ENCODE measurements at regions of chr12 and their contacts with region 1.

Region 1: DNA sequence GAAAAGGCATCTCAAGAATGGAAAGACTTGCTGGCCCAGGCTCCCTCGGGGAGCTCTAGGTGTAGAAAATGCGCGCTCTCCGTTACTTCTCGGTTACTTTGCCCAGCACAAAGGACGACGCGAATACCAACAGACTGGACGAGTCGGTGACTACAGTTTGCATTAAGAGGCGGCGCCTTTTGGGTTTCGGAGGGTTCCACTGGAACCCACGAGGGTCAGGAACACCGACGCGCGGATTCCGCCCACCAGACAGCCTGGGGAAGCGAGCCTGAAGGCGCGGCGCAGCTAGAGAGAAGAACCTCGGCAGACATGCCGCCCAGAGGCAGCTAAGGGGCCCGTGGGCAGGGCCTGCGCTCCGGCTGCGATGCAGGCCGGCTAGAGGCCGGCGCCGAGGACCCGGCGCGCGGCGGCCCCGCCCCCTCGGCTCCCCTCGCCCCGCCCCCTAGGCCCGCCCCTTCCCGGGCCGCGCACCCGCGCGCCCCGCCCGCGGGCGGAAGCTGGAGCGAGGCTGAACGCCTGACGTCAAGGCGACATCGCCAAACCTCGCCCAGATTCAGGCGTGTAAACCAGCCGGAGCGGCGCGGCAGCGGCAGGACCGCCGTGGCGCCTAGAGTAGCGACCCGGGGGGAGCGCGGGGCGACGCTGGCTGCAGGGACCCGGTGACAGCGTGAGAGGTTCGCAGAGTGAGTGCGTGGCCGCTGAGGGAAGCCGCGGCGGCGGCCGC is at the start of gene RAP1B:
- DNase-seq: peak; percentile 88
- H3K4me3 Mint-ChIP-seq: peak within 1 kb of the TSS; percentile 94
- H3K27ac Mint-ChIP-seq: peak within 1 kb of the TSS; percentile 97
- H3K4me1 Mint-ChIP-seq: peaks cover 43% of the 10 kb centered on the region
- H3K27me3 Mint-ChIP-seq: no peaks in the 10 kb centered on the region
- total RNA-seq, gene RAP1B: 174 and 182 TPM in 2 replicates

Region 2: GRCh38 chr12:68189821-68190242 is 420.7 kb before region 1 on chr12:
- intact Hi-C with region 1: no loop called
- DNase-seq: no peak
- H3K4me3 Mint-ChIP-seq: no peak overlapping the region
- H3K27ac Mint-ChIP-seq: peak overlapping the region; percentile 56
- H3K4me1 Mint-ChIP-seq: peaks cover 16% of the 10 kb centered on the region
- H3K27me3 Mint-ChIP-seq: peaks cover 52% of the 10 kb centered on the region

Region 3: DNA sequence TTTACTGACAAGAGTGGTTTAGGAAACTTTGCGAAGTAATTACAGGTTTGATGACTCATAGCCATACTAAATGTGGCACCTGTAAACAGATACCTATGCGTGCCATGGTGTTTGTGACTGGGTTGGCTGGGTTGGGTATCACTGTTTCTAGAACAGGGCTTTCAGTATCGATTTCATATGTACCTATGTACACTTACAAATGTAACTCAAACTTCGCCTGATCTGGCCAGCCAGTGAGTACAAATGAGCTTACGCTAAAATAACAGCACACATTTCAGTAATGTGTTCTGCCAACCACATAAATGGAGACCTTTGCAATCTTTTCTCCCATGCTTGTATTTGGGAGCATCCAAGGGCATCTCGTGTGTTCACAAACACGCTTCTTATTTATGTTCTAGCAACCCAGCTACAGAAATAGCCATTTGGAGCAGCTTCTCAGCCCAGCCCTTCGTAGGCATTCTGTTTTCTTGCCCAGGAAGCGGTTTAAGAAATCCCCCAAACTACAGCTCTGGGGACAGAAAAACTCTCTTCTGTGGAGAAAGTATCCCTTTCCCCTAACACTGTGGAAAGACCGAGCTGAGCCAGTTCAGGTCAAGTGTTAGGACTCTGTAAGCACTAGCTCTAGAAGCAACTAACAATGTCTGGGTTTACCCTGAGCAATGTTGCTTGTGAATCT is 236.1 kb before region 1 on chr12:
- intact Hi-C with region 1: loop called (anchors 1 kb)
- DNase-seq: peak; percentile 57
- H3K4me3 Mint-ChIP-seq: no peak overlapping the region
- H3K27ac Mint-ChIP-seq: peak overlapping the region; percentile 91
- H3K4me1 Mint-ChIP-seq: peaks cover 30% of the 10 kb centered on the region
- H3K27me3 Mint-ChIP-seq: no peaks in the 10 kb centered on the region

Region 4: GRCh38 chr12:68497702-68498101 is 112.8 kb before region 1 on chr12:
- intact Hi-C with region 1: loop called (anchors 1 kb)
- DNase-seq: no peak
- H3K4me3 Mint-ChIP-seq: peak overlapping the region; percentile 51
- H3K27ac Mint-ChIP-seq: peak overlapping the region; percentile 86
- H3K4me1 Mint-ChIP-seq: peaks cover 33% of the 10 kb centered on the region
- H3K27me3 Mint-ChIP-seq: peaks cover 3% of the 10 kb centered on the region

Region 5: DNA sequence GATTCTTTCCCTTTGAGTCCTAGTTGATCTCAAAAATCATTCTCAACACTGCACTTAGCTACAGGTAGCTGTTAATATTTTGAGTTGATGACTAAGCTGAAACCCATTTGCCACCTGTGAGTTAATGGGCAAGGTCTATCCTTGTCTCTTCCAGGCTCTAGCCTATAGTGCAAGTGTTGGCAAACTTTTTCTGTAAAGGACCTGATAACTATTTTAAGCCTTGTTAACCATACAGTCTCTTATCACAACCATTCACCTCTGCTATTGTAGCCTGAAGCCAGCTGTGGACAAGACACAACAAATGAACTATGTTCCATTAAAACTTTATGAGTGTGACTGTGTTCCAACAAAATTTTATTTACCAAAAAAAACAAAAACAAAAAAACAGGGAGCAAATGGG is 19.5 kb after region 1 on chr12:
- intact Hi-C with region 1: loop called (anchors 2 kb)
- DNase-seq: no peak
- H3K4me3 Mint-ChIP-seq: no peak overlapping the region
- H3K27ac Mint-ChIP-seq: no peak overlapping the region
- H3K4me1 Mint-ChIP-seq: peaks cover 49% of the 10 kb centered on the region
- H3K27me3 Mint-ChIP-seq: no peaks in the 10 kb centered on the region

Region 6: DNA sequence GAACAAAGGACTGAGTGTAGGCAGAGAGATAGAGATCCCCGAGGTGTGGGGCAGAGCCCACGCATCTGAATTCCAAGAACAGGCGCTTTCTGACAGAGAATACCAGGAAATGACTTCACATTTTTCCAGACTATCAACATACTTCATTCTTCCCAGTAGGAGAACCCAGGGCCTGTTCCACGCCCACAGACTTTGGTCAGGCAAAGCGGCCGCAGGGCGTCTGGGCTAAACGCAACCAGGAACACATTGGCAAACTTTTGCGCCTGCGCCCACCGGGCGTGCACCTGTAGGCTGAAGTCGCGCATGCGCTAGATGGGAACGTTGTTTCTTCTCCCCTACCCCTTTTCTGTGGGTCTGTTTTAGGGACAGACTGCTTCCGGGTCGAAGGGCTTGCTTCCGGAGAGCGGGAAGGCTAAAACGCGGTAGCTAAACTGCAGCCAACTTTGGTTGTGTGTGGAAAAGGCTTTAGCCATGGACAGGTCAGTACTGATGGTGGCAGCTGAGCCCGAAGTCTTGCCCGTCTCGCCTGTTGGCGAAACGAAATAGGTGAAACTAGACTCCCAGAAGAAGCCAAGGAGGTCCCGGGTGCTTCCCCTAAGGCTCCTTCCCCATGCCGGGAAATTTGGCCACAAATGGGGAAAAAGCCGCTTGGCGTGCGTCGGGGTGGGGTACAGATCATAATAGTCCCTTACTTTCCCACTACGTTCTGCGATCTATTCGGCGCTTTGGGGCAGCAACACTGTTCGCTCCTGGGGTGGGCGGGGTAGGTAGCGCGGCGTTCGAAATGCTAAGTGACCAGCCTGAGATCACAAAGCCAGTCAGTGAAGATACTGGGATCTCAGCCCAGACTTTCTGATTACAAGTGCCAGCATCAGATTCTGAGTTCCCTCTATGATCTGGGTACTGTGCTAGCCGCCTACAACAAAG is 76.3 kb after region 1 on chr12 and contains the start of gene NUP107:
- intact Hi-C with region 1: loop called (anchors 2 kb)
- DNase-seq: peak; percentile 94
- H3K4me3 Mint-ChIP-seq: peak within 1 kb of the TSS; percentile 93
- H3K27ac Mint-ChIP-seq: peak within 1 kb of the TSS; percentile 93
- H3K4me1 Mint-ChIP-seq: peaks cover 31% of the 10 kb centered on the region
- H3K27me3 Mint-ChIP-seq: no peaks in the 10 kb centered on the region
- total RNA-seq, gene NUP107: 101 and 106 TPM in 2 replicates